Activated naive CD4-positive, alpha-beta T cell treated with anti-CD3 and anti-CD28 coated beads for 36 hours (primary cell): ENCODE measurements at regions of chrX and their contacts with region 1.

Region 1: GRCh38 chrX:120485638-120486520 is 16.8 kb upstream of the LAMP2 start:
- DNase-seq: peak; percentile 63
- H3K4me3 Mint-ChIP-seq: peak overlapping the region; percentile 68
- H3K27ac Mint-ChIP-seq: peak overlapping the region; percentile 83
- H3K4me1 Mint-ChIP-seq: peaks cover 27% of the 10 kb centered on the region
- H3K27me3 Mint-ChIP-seq: no peaks in the 10 kb centered on the region

Region 2: GRCh38 chrX:120090208-120090607 is 395.7 kb before region 1 on chrX:
- CTCF ChIA-PET with region 1: no interaction called
- intact Hi-C with region 1: no loop called
- DNase-seq: no peak
- H3K4me3 Mint-ChIP-seq: no peak overlapping the region
- H3K27ac Mint-ChIP-seq: no peak overlapping the region
- H3K4me1 Mint-ChIP-seq: no peaks in the 10 kb centered on the region
- H3K27me3 Mint-ChIP-seq: no peaks in the 10 kb centered on the region

Region 3: GRCh38 chrX:120308959-120309872 is 176.7 kb before region 1 on chrX:
- CTCF ChIA-PET with region 1: no interaction called
- intact Hi-C with region 1: loop called (anchors 5 kb)
- DNase-seq: peak; percentile 80
- H3K4me3 Mint-ChIP-seq: peak overlapping the region; percentile 79
- H3K27ac Mint-ChIP-seq: peak overlapping the region; percentile 15
- H3K4me1 Mint-ChIP-seq: peaks cover 7% of the 10 kb centered on the region
- H3K27me3 Mint-ChIP-seq: peaks cover 17% of the 10 kb centered on the region

Region 4: DNA sequence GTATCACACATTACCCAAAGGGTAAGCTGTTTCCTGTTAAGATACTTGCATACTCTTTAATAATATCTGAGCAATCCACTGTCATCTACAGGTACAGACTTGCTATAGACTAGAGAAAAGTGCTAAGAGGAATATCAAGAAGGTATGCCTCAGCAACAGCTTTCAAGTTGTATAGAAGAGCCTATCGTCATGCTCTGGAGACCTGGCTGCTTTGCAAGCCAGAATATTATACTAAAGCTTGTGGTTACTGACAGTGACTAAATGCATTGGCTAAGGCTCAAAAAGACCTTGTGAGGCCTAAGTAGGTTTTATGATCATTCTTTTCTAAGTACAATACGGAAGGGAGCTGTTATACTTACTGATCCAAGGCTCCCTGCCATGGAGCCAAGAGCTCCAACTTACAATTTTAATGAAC is 28.1 kb before region 1 on chrX:
- CTCF ChIA-PET with region 1: interaction called, 4 read pairs
- intact Hi-C with region 1: loop called (anchors 1 kb)
- DNase-seq: peak; percentile 9
- H3K4me3 Mint-ChIP-seq: no peak overlapping the region
- H3K27ac Mint-ChIP-seq: peak overlapping the region; percentile 59
- H3K4me1 Mint-ChIP-seq: peaks cover 44% of the 10 kb centered on the region
- H3K27me3 Mint-ChIP-seq: no peaks in the 10 kb centered on the region

Region 5: GRCh38 chrX:120468825-120469525 is 16.9 kb before region 1 on chrX and contains the start of gene LAMP2:
- CTCF ChIA-PET with region 1: interaction called, 5 read pairs
- intact Hi-C with region 1: loop called (anchors 1 kb)
- DNase-seq: peak; percentile 87
- H3K4me3 Mint-ChIP-seq: peak within 1 kb of the TSS; percentile 86
- H3K27ac Mint-ChIP-seq: peak within 1 kb of the TSS; percentile 91
- H3K4me1 Mint-ChIP-seq: peaks cover 15% of the 10 kb centered on the region
- H3K27me3 Mint-ChIP-seq: no peaks in the 10 kb centered on the region
- total RNA-seq, gene LAMP2: 37.9 to 38.0 TPM

Region 6: GRCh38 chrX:120603707-120604360 is 118.0 kb after region 1 on chrX and contains the start of gene MCTS1:
- CTCF ChIA-PET with region 1: no interaction called
- intact Hi-C with region 1: loop called (anchors 5 kb)
- DNase-seq: peak; percentile 86
- H3K4me3 Mint-ChIP-seq: peak within 1 kb of the TSS; percentile 95
- H3K27ac Mint-ChIP-seq: peak within 1 kb of the TSS; percentile 98
- H3K4me1 Mint-ChIP-seq: peaks cover 7% of the 10 kb centered on the region
- H3K27me3 Mint-ChIP-seq: no peaks in the 10 kb centered on the region
- total RNA-seq, gene MCTS1: 58.6 to 63.4 TPM

Region 7: DNA sequence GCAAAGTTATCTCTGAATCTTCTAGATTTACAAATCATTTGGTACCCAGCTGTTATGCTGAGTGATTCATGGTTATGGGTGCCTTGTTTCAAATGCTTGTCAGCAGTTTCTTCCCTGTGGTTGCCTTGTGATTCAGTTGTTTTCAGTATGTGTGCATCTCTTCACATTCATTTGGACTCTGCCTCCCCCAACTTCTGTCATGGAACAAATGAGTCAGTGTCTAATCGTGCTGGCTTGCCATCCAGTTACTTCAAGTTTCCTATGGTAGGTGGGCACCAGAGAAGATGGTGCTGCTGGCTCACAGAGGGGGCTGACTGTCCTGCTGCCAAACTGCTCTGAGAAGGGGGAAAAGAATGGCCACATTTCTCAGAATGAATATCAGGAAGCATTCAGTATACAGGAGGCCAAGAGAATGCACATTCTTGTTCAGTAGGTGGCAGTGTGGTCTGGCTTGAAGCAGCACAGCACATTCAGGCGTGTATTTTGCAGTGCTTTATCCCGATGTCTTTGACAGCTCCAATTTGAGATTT is 822.5 kb after region 1 on chrX:
- CTCF ChIA-PET with region 1: no interaction called
- intact Hi-C with region 1: no loop called
- DNase-seq: peak; percentile 83
- H3K4me3 Mint-ChIP-seq: peak overlapping the region; percentile 32
- H3K27ac Mint-ChIP-seq: peak overlapping the region; percentile 77
- H3K4me1 Mint-ChIP-seq: peaks cover 23% of the 10 kb centered on the region
- H3K27me3 Mint-ChIP-seq: no peaks in the 10 kb centered on the region